ENCODE measurements at regions of chr1 and their contacts with region 1.

Region 1: DNA sequence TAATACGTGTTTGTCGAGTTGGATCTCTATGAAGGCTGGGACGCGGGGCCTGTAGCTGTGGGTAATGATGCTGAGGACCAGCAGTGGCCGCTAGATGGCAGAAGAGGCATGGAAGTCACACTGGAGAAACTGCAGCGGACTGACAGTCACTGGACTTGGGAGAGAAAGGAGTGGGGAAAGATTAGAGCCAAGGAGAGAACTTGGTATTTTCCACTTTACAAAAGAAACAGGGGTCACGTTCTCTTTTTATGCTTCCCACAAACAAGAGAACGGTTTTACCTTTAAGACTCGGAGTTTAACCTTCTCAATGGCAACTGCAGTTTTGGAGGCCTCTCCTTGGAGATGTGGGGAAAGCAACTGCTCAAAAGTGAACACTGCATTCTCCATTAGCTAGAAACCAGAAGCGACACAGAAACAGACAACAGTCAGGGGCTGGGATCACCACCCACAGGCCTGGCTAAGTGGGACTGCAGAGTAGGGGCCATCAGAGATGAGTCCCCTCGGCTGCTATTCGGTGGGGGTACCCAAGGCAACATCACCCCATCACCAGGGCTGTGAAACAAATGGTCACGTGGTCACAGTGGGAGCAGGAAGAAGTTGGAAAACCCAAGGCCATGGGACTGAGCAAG is 51.1 kb upstream of the EDEM3 start:
- DNase-seq: peak; percentile 85 to 90 (median 86)
- H3K4me3 ChIP-seq: peak overlapping the region in 2 of 7 experiments; percentile 36 to 56
- H3K27ac ChIP-seq: peak overlapping the region in 1 of 2 experiments; percentile 29
- H3K4me1 ChIP-seq: peaks cover 4 to 17% (median 11%) of the 10 kb centered on the region in 4 experiments
- H3K27me3 ChIP-seq: no peaks in the 10 kb centered on the region

Region 2: GRCh38 chr1:184664042-184664655 is 141.6 kb before region 1 on chr1:
- CTCF ChIA-PET with region 1: no interaction called
- POLR2A ChIA-PET with region 1: no interaction called
- DNase-seq: peak; percentile 61 to 76 (median 74)
- H3K4me3 ChIP-seq: peak overlapping the region; percentile 5 to 73 (median 46)
- H3K27ac ChIP-seq: no peak overlapping the region
- H3K4me1 ChIP-seq: peaks cover 0 to 10% (median 9%) of the 10 kb centered on the region in 4 experiments
- H3K27me3 ChIP-seq: peaks cover 0 to 4% (median 2%) of the 10 kb centered on the region in 5 experiments

Region 3: DNA sequence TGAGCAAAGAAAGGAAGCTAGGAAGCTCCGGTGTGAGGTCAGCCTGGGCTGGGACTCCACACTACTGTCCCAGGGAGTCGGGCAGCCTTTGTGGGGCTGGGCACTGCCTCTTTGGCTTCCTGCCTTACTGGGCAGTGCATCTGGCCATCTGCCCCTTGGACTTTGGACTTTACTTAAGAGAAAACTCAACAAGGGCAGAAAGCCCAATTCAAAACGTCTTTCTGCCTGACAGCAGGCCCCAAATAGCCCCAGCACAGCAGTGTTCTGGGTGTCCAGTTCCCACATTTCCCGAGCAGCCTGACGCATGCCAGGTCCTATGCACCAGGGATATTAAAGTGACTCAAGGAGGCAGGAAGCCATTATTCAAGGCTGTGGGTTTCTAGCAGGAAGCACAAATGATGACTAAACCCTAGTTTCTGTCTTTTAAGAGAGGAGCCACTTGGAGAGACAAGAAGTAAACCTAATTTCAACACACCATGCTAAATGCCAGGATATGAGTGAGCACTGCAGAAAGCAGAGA is 13.3 kb before region 1 on chr1:
- CTCF ChIA-PET with region 1: interaction called, 37 read pairs
- POLR2A ChIA-PET with region 1: no interaction called
- DNase-seq: peak; percentile 78 to 95 (median 90)
- H3K4me3 ChIP-seq: peak overlapping the region in 2 of 7 experiments; percentile 17 to 43
- H3K27ac ChIP-seq: peak overlapping the region; percentile 39 to 48
- H3K4me1 ChIP-seq: peaks cover 5 to 34% (median 21%) of the 10 kb centered on the region in 4 experiments
- H3K27me3 ChIP-seq: no peaks in the 10 kb centered on the region

Region 4: GRCh38 chr1:184973272-184974055 is 167.7 kb after region 1 on chr1:
- CTCF ChIA-PET with region 1: interaction called, 17 read pairs
- POLR2A ChIA-PET with region 1: interaction called, 4 read pairs
- DNase-seq: peak; percentile 71 to 92 (median 91)
- H3K4me3 ChIP-seq: peak overlapping the region; percentile 78 to 89 (median 83)
- H3K27ac ChIP-seq: peak overlapping the region; percentile 21 to 83
- H3K4me1 ChIP-seq: peaks cover 4 to 29% (median 21%) of the 10 kb centered on the region in 4 experiments
- H3K27me3 ChIP-seq: peaks cover 0 to 7% (median 0%) of the 10 kb centered on the region in 5 experiments

Region 5: DNA sequence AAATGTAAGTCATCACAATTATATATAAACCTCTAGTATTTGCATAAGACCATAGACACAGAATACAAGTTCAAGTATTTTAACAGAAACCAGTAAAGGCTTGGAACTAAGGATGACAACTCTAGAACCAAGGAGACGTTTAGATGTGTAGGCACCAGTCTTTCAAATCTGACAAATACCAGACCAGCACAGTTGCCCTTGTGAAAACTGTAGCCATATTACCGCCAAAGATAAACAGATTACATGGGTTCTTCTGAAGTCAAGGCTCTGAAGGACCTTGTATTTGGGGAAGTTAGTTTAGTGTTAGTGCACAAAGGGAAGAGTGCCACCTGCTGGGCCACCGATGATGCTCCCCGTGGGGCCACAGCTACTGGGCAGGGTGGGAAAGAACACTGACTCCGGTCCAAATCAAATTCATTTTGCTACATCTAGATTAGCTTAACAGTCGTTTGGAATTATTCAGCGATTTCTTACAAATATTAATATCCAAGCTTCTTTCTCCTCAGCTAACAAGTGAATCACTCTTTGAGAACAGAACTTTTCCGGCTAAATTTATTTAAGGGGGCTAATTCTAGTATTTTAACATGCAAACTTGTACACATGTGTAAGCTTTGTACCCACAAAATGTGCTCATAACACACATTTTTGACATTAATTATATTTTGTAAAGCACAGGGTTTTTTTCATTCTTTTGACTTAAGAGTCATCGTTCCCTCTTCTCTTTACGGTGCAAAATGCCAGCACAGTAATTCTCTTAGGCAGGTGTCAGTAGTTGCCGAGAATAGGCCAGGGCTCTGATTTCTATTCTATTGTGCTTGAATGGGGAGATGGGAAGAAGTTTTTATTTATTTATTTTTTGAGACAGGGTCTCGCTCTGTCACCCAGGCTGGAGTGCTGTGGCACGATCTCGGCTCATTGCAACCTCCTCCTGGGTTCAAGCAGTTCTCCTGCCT is 176.5 kb after region 1 on chr1:
- CTCF ChIA-PET with region 1: interaction called, 154 read pairs
- POLR2A ChIA-PET with region 1: interaction called, 3 read pairs
- DNase-seq: peak; percentile 81 to 93 (median 91)
- H3K4me3 ChIP-seq: peak overlapping the region in 1 of 7 experiments; percentile 14
- H3K27ac ChIP-seq: no peak overlapping the region
- H3K4me1 ChIP-seq: peaks cover 0 to 2% (median 0%) of the 10 kb centered on the region in 4 experiments
- H3K27me3 ChIP-seq: no peaks in the 10 kb centered on the region

Region 6: GRCh38 chr1:185170291-185170848 is 364.6 kb after region 1 on chr1:
- CTCF ChIA-PET with region 1: interaction called, 44 read pairs
- POLR2A ChIA-PET with region 1: no interaction called
- DNase-seq: peak; percentile 76 to 89 (median 87)
- H3K4me3 ChIP-seq: peak overlapping the region in 4 of 7 experiments; percentile 4 to 55 (median 44)
- H3K27ac ChIP-seq: no peak overlapping the region
- H3K4me1 ChIP-seq: peaks cover 6 to 10% (median 9%) of the 10 kb centered on the region in 4 experiments
- H3K27me3 ChIP-seq: no peaks in the 10 kb centered on the region

Measured in common myeloid progenitor, CD34-positive (primary cell).